ENCODE measurements at regions of chr9 and their contacts with region 1.

Region 1: DNA sequence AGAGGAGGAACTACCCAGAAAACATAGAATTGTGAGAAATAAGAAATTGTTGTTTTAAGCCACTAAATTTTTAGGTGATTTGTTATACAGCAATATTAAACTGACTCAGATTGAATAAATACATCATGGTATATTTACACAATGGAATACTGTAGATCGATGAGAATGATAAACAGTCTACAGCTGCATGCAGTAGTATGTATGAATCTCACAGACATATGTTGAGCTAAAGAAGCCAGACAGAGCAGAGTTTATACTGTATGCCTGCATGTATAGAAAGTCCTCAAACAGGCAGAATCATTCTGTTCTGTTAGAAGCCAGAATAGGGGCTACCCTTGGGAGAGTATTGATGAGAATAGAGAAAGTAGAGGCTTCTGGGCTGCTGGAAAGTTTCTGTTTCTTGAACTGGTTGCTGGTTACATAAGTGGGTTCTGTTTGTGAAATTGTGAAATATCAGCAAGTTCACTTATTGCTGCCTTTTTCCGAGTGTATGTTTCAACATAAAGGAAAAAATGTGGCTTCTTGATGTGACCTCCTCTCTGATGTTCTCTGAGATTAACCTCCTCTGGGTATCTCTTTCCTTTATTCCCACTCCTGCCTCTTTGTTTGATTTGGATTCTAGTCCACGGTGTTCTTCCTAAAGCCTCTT is 9.6 kb downstream of the KIAA1958 start:
- DNase-seq: no peak
- ATAC-seq: no peak

Region 2: DNA sequence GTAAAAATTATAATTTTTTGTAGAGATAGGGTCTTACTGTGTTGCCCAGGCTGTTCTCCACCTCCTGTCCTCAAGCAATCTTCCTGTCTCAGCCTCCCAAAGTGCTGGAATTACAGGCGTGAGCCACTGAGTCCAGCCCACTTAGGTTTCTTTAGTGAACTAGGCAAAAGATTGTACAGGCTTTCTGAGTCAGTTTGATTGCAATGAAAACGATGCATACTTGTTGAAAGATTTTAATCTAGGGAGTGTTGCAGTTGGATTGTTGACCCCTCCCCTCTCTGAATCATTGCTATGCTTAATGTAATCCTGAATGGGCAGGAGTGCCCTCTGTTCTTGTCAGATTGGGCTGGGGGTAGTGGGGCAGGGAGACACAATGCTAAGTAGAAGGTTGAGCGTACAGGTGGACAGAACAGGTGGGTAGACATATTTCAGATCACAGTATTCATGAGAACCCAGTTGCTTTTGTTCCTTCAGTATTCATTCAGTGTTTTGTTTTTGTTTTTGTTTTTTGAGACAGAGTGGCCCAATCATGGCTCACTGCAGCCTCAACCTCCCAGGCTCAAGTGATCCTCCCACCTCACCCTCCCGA is 60.4 kb after region 1 on chr9:
- intact Hi-C with region 1: loop called (anchors 5 kb)
- DNase-seq: no peak
- ATAC-seq: no peak

Measured in Right ventricle myocardium inferior (tissue), 1 donor.